WTC11 (cell line): ENCODE measurements at regions of chr14 and their contacts with region 1.

Region 1: DNA sequence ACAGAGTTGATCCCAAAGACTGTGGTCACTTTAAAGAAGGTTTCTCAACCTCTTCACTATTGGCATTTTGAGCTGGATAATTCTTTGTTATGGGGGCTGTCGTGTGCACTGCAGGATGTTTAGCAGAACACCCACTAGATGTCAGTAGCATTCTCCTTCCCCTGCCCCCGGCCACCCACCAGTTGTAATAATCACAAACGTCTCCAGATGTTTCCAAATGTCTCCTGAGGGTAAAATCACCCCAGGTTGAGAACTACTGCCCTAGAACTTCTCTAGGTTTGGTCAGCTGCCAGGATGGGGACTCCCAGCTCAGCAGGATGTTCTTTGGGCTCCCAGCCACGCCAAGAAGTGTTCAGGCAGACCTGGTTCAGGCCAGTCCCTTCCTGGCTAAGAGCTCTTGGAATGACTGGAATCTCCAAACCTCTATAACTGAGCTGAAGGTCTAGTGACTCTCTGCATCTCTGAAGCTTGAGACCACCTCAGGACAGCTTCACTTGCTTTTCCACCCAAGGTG is 12.5 kb upstream of the AJUBA start:
- DNase-seq: peak; percentile 32
- ATAC-seq: peak; percentile 87
- H3K4me3 Mint-ChIP-seq: no peak overlapping the region
- H3K27ac Mint-ChIP-seq: peak overlapping the region; percentile 91
- H3K4me1 Mint-ChIP-seq: peaks cover 5% of the 10 kb centered on the region
- H3K27me3 Mint-ChIP-seq: no peaks in the 10 kb centered on the region; the same call in 1 of the 2 replicates
- CTCF ChIP-seq: 0 out of 2 replicates have a peak, but pooled peaks have one; percentile 14

Region 2: GRCh38 chr14:22908601-22909000 is 86.2 kb before region 1 on chr14:
- CTCF ChIA-PET with region 1: no interaction called
- POLR2A ChIA-PET with region 1: no interaction called
- DNase-seq: no peak
- ATAC-seq: no peak
- H3K4me3 Mint-ChIP-seq: no peak overlapping the region
- H3K27ac Mint-ChIP-seq: peak overlapping the region; percentile 65; the same call in 1 of the 2 replicates
- H3K4me1 Mint-ChIP-seq: no peaks in the 10 kb centered on the region
- H3K27me3 Mint-ChIP-seq: no peaks in the 10 kb centered on the region
- CTCF ChIP-seq: no peak

Region 3: DNA sequence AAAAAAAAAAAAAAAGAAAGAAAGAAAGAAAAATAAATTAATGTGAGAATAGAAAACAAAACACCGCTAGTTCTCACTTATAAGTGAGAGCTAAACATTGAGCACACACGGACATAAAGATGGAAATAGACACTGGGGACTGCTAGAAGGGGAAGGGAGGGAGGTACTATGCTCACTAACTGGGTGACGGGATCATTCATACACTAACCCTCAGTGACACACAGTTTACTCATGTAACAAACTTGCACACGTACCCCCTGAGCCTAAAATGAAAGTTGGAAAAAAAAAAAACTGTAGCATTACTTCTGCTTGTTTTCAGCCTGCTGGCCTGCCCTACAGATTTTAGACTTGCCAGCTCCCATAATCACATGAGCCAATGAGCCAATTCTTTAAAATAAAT is 55.1 kb before region 1 on chr14:
- CTCF ChIA-PET with region 1: interaction called, 19 read pairs
- POLR2A ChIA-PET with region 1: no interaction called
- DNase-seq: no peak
- ATAC-seq: no peak
- H3K4me3 Mint-ChIP-seq: no peak overlapping the region
- H3K27ac Mint-ChIP-seq: no peak overlapping the region; the same call in 1 of the 2 replicates
- H3K4me1 Mint-ChIP-seq: 0 out of 2 replicates have a peak, but pooled peaks cover 2% of the 10 kb centered on the region
- H3K27me3 Mint-ChIP-seq: no peaks in the 10 kb centered on the region
- CTCF ChIP-seq: no peak

Region 4: DNA sequence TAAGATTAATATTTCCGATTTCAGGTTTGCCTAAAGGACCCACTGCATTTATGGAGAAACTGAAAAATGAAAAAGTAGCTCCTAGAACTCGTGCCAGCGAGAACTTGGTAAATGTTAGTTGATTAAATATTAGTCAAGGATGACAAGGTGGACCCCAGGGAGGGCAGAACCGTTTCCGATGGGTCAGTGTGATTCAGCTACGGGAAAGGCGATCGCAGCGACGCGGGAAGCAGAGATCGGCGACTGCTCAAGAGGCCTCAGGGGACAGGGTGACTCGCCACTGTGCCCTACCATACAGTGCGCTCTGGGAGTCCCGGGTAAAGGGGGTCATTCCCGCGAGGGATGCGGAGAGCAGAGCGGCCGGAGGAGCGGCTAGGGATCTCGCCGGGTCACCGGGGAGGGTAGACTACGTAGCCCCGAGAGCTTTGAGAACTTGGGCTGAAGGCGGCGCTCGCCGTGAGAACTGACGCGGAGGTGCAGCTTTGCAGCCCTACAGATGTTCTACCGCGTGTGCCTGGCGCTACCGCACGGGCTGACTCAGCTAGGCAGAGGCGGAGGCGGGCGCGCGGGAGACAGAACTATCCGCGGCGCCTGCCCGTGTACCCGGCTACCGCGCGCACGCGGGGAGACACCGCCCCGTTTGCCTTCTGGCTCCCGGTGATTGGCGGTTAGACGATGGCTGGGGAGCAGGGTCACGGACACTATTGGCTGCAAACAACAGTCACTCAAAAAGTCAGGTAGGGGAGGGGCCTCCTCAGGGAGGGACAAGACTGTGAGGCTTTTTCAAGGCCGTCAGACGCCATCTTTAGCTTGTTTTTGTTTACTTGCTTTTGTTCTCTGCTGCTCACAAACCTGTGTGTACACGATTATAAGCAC is 12.0 kb after region 1 on chr14:
- CTCF ChIA-PET with region 1: interaction called, 75 read pairs
- POLR2A ChIA-PET with region 1: interaction called, 16 read pairs
- DNase-seq: peak; percentile 96
- ATAC-seq: peak; percentile 97
- H3K4me3 Mint-ChIP-seq: peak overlapping the region; percentile 91
- H3K27ac Mint-ChIP-seq: peak overlapping the region; percentile 100
- H3K4me1 Mint-ChIP-seq: peaks cover 31% of the 10 kb centered on the region
- H3K27me3 Mint-ChIP-seq: no peaks in the 10 kb centered on the region
- CTCF ChIP-seq: no peak

Region 5: DNA sequence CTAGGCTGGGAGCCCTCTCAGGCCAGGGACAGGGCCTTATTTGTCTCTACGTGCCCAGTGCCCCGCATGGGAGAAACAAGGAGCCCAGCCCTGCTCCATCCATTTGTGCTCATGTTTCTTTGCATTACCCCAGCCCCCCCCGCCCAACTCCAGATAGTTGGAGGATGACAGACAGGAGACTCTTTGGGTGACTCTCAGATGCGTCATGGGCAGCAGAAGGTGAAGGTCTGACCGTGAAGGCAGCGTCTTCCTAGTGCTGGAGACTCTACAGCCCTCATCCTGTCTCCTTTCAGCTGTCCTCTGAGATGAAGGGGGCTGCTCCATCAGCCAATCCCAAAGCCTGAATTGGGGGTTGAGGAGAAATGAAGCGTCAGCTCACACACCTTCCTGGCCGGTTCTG is 46.9 kb after region 1 on chr14:
- CTCF ChIA-PET with region 1: interaction called, 36 read pairs
- POLR2A ChIA-PET with region 1: interaction called, 4 read pairs
- DNase-seq: no peak
- ATAC-seq: no peak
- H3K4me3 Mint-ChIP-seq: no peak overlapping the region
- H3K27ac Mint-ChIP-seq: no peak overlapping the region
- H3K4me1 Mint-ChIP-seq: peaks cover 5% of the 10 kb centered on the region; the same call in 1 of the 2 replicates
- H3K27me3 Mint-ChIP-seq: no peaks in the 10 kb centered on the region
- CTCF ChIP-seq: no peak

Region 6: DNA sequence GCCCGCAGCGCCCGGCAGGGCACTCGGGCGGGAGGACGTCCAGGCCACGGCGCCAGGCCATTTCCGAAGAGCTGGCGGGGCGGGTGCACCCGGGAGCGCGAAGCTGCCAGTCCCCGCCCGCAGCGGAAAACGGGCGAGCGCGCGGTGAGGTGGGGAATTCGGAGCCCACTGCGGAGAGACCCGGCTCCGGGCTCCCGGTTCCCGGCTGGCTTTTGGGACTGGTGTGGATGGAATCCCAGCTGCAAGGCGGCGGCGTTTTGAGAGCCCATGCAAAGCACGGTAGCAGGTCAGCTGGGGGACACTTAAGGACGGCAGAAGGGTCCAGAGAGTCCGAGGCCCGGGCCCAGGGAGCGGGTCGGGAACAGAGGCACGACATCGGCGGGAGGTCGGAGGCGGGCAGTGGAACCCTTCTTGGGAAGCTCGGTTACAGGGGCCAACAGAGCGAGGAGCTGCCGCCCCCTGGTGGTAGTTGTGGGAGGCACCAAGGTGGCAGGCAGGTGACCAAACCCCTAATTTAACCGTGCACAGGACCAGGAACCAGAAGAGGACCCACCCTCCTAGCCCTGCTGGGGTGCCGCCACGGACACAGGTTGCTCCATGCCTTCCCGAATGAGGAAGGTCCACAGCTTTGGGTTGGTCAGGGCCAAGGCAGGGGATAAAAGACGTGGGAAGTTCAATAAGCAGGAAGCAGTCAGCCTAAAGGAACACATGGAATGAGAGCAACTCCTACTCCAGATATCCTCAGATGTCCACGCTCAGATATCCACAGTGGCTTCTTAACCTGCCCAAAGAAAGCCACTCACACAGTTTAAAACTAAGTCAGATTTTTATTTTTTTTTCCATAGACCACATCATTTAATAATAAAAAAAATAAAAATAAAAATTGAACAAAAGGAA is 63.2 kb after region 1 on chr14:
- CTCF ChIA-PET with region 1: interaction called, 149 read pairs
- POLR2A ChIA-PET with region 1: interaction called, 9 read pairs
- DNase-seq: peak; percentile 96
- ATAC-seq: peak; percentile 66
- H3K4me3 Mint-ChIP-seq: peak overlapping the region; percentile 83
- H3K27ac Mint-ChIP-seq: peak overlapping the region; percentile 91
- H3K4me1 Mint-ChIP-seq: peaks cover 12% of the 10 kb centered on the region
- H3K27me3 Mint-ChIP-seq: peaks cover 5% of the 10 kb centered on the region; the same call in 1 of the 2 replicates
- CTCF ChIP-seq: peak; percentile 97

Region 7: DNA sequence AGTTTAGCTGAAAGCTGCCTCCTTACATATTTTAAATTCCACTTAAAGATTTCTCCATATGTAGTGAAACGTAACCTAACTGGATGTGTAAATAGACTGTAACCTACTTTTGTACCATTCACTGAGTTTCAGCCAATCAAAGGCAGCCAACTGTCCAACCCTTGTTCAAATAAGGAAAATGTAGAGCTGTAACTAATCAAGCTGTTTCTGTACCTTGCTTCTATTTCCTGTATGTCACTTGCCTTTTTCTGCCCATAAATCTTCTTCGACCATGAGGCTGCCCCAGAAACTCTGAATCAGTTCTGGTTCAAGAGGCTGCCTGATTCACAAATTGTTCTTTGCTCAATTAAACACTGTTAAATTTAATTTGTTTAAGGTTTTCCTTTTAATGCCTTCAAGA is 182.4 kb after region 1 on chr14:
- CTCF ChIA-PET with region 1: no interaction called
- POLR2A ChIA-PET with region 1: no interaction called
- DNase-seq: no peak
- ATAC-seq: no peak
- H3K4me3 Mint-ChIP-seq: no peak overlapping the region
- H3K27ac Mint-ChIP-seq: peak overlapping the region; percentile 24; the same call in 1 of the 2 replicates
- H3K4me1 Mint-ChIP-seq: peaks cover 81% of the 10 kb centered on the region
- H3K27me3 Mint-ChIP-seq: no peaks in the 10 kb centered on the region
- CTCF ChIP-seq: no peak